Activated CD8-positive, alpha-beta T cell treated with anti-CD3 and anti-CD28 coated beads for 36 hours (primary cell): ENCODE measurements at regions of chr14 and their contacts with region 1.

Region 1: DNA sequence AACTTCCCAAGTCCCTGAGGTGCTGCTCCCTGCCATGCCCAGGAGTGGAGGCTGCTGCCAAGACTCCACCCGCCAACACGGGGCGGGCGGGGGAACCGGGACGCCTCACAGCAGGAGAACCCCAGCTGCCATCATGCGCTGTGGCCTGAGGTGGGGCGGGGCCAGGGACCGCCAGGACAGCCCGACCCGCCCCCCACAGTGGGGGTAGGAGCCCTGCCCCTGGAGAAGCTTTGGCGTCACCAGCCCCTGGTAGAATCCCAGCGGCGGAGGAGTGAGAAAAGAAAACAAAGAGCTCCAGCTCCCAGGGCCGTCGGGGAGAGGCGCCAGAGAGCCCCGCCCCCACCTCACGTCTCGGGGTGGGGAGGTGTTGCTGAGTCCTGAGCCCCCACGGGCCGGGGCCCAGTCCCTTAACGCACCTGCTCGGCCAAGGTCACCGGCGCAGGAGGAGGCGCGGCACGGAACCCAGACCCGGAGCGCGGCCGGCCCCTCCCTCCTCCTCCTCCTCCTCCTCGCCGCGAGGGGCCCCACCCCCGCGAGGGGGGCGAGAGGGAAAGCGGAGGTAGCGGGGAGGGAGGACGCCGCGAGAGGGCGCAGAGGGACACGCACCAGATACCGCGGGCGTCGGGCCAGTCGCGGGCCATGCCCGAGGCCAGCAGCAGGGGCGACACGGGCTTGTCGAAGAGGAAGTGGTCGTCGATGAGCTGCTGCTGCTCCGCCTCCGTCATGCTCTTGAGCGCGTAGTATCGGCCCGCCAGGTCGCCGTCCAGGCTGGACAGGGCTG is 1.8 kb downstream of the CKB start:
- DNase-seq: peak; percentile 76
- ATAC-seq: peak; percentile 72
- H3K4me3 Mint-ChIP-seq: peak overlapping the region; percentile 50
- H3K27ac Mint-ChIP-seq: no peak overlapping the region
- H3K4me1 Mint-ChIP-seq: peaks cover 10% of the 10 kb centered on the region
- H3K27me3 Mint-ChIP-seq: peaks cover 12% of the 10 kb centered on the region
- CTCF ChIP-seq: peak; percentile 59

Region 2: DNA sequence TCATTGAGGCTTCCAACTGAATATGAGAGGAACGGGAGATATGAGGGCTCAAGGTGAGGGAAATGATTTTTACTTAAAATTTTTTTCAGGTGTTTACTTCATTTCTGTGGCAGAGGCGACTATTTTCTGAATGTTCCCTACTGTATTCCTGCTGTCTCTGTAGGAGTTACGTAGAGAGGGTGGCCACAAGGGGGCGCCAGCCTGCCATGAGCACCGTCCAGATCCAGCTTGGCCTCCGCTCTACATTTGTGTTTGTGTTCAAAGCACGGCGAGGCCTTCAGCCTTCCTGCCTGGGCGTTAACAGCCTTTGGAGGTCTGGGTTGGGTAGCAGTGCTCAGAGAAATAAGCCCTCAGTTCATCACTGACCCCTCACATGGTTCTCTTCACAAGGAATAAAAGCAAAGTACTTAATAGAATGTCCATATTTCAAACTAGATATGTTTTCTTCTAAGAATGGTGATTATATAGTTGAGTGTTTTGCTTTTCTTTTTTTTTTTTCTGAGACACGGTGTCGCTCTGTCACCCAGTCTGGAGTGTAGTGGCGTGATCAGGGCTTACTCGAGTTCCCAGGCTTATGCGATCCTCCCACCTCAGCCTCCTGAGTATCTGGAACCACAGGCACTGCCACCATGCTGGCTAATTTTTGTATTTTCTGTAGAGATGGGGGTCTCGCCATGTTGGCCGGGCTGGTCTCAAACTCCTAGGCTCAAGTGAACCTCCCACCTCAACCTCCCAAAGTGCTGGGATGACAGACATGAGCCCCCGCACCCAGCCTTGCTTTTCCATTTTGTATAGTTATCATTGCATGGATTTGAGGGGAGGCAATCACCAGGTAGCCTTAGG is 20.5 kb before region 1 on chr14:
- CTCF ChIA-PET with region 1: interaction called, 19 read pairs
- POLR2A ChIA-PET with region 1: no interaction called
- intact Hi-C with region 1: no loop called
- DNase-seq: peak; percentile 90
- ATAC-seq: peak; percentile 96
- H3K4me3 Mint-ChIP-seq: no peak overlapping the region
- H3K27ac Mint-ChIP-seq: peak overlapping the region; percentile 57
- H3K4me1 Mint-ChIP-seq: peaks cover 8% of the 10 kb centered on the region
- H3K27me3 Mint-ChIP-seq: no peaks in the 10 kb centered on the region
- CTCF ChIP-seq: peak; percentile 93

Region 3: GRCh38 chr14:103510311-103511021 is 10.4 kb before region 1 on chr14:
- CTCF ChIA-PET with region 1: interaction called, 19 read pairs
- POLR2A ChIA-PET with region 1: interaction called, 3 read pairs
- intact Hi-C with region 1: no loop called
- DNase-seq: no peak
- ATAC-seq: no peak
- H3K4me3 Mint-ChIP-seq: no peak overlapping the region
- H3K27ac Mint-ChIP-seq: no peak overlapping the region
- H3K4me1 Mint-ChIP-seq: no peaks in the 10 kb centered on the region
- H3K27me3 Mint-ChIP-seq: no peaks in the 10 kb centered on the region
- CTCF ChIP-seq: no peak

Region 4: GRCh38 chr14:103546652-103547454 is 26.0 kb after region 1 on chr14:
- CTCF ChIA-PET with region 1: interaction called, 18 read pairs
- POLR2A ChIA-PET with region 1: interaction called, 5 read pairs
- intact Hi-C with region 1: no loop called
- DNase-seq: peak; percentile 85
- ATAC-seq: peak; percentile 91
- H3K4me3 Mint-ChIP-seq: no peak overlapping the region
- H3K27ac Mint-ChIP-seq: no peak overlapping the region
- H3K4me1 Mint-ChIP-seq: no peaks in the 10 kb centered on the region
- H3K27me3 Mint-ChIP-seq: no peaks in the 10 kb centered on the region
- CTCF ChIP-seq: peak; percentile 98

Region 5: GRCh38 chr14:103552011-103552845 is 31.4 kb after region 1 on chr14:
- CTCF ChIA-PET with region 1: interaction called, 18 read pairs
- POLR2A ChIA-PET with region 1: interaction called, 4 read pairs
- intact Hi-C with region 1: no loop called
- DNase-seq: no peak
- ATAC-seq: no peak
- H3K4me3 Mint-ChIP-seq: no peak overlapping the region
- H3K27ac Mint-ChIP-seq: no peak overlapping the region
- H3K4me1 Mint-ChIP-seq: peaks cover 8% of the 10 kb centered on the region
- H3K27me3 Mint-ChIP-seq: no peaks in the 10 kb centered on the region
- CTCF ChIP-seq: no peak

Region 6: GRCh38 chr14:103688906-103689902 is 168.4 kb after region 1 on chr14:
- CTCF ChIA-PET with region 1: no interaction called
- POLR2A ChIA-PET with region 1: no interaction called
- intact Hi-C with region 1: no loop called
- DNase-seq: no peak
- ATAC-seq: no peak
- H3K4me3 Mint-ChIP-seq: no peak overlapping the region
- H3K27ac Mint-ChIP-seq: no peak overlapping the region
- H3K4me1 Mint-ChIP-seq: no peaks in the 10 kb centered on the region
- H3K27me3 Mint-ChIP-seq: no peaks in the 10 kb centered on the region
- CTCF ChIP-seq: no peak

Region 7: GRCh38 chr14:103699901-103700752 is 179.3 kb after region 1 on chr14:
- CTCF ChIA-PET with region 1: no interaction called
- POLR2A ChIA-PET with region 1: no interaction called
- intact Hi-C with region 1: no loop called
- DNase-seq: no peak
- ATAC-seq: no peak
- H3K4me3 Mint-ChIP-seq: no peak overlapping the region
- H3K27ac Mint-ChIP-seq: no peak overlapping the region
- H3K4me1 Mint-ChIP-seq: peaks cover 6% of the 10 kb centered on the region
- H3K27me3 Mint-ChIP-seq: no peaks in the 10 kb centered on the region
- CTCF ChIP-seq: no peak